ENCODE measurements at regions of chr6 and their contacts with region 1.

Region 1: DNA sequence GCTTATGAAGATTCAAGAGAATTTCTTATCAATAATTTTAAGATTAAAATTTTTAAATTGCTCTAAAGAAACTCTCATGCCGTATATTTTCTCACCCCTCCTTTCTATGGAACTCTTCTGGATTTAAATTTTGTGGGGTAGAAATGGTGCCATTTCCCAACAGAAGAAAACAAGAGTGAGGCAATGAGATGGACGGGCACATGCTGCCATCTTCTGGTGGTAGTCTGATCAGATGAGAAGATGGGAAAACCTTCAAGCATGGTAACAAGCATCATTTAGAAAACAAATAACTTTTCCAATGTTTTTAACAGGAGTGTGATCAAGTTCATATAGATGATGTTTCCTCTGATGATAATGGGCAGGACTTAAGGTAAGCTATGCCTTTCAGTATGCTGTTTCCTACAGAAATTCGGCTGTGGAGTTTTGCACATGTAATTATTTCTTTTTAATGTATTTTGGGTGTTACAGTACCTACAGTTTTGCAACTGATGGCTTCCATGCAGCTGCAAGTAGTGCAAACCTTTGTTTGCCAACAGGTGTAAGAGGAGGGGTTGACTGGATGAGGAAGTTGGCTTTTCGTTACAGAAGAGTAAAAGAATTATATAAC is 271.4 kb downstream of the EYA4 start:
- DNase-seq: peak in 2 of 4 donors; percentile 42 to 64
- ATAC-seq: peak; percentile 76
- H3K4me3 ChIP-seq: no peak overlapping the region
- H3K27ac ChIP-seq: no peak overlapping the region
- H3K4me1 ChIP-seq: no peaks in the 10 kb centered on the region
- H3K27me3 ChIP-seq: no peaks in the 10 kb centered on the region
- CTCF ChIP-seq: peak; percentile 41 to 65

Region 2: GRCh38 chr6:132820629-132821381 is 691.7 kb before region 1 on chr6:
- intact Hi-C with region 1: loop called in 1 of 2 experiments (anchors 10 kb)
- DNase-seq: no peak
- ATAC-seq: peak; percentile 17
- H3K4me3 ChIP-seq: no peak overlapping the region
- H3K27ac ChIP-seq: peak overlapping the region in 1 of 2 donors; percentile 45
- H3K4me1 ChIP-seq: peaks cover 12 to 34% of the 10 kb centered on the region in 2 donors
- H3K27me3 ChIP-seq: no peaks in the 10 kb centered on the region
- CTCF ChIP-seq: no peak

Measured in left lung (tissue), 14 donors.